ENCODE measurements at regions of chr1 and their contacts with region 1.

Region 1: DNA sequence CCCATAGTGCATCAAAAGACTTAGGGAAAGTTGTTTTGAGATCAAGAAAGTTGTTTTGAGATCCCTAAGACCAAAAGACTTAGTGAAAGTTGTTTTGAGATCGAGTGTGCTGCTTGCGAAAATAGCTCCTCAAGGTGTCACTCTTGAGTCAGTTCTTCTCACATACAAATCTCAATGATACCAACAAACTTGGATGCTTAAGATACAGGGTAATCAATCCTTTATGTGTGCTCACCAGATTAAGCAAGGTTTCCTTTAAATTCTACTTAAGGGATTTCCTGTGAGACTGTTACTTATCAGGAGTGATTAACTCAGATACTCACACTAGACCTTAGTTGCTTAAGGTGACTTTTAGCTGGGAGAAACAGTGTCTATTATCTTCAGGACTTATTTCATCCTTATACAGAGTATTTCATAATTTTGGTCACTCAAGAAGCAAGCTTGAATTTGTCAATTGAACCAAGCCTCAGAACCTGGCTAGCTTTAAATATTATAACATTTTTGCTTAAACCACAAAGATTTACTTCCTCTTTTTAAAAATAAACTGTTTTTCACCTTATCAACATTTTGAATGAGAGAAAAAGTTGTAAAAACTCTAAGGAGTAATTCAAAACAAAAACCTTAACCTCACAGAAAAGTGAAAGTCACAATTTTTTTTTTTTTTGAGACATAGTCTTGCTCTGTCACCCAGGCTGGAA is 8.0 kb upstream of the RLF start:
- DNase-seq: no peak
- H3K4me3 ChIP-seq: no peak overlapping the region
- CTCF ChIP-seq: peak; percentile 65

Region 2: DNA sequence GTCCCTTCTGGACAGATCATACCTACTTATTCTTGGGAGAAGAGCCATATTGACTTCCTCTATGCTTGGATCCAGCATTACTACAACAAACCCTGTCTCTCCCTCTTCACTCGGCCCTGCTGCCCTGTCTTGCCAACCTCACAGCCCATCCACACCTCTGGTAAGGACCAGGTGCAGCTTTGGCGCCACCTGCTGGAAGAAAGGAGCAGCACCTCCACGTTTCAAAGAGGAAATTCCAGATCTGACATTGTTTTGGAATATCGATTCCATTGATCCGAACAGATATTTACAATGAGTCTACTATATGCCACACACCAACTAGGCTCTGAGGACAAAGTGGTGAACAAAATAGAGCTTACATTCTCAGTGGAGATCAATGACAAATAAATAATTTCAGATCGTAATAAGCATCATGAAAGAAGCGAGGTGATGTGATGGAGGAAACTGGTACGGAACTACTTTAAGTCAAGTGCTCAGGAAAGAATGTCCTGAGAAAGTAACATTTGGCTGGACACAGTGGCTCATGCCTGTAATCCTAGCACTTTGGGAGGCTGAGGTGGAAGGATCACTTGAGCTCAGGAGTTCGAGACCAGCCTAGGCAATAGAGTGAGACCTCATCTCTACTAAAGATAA is 179.6 kb before region 1 on chr1:
- CTCF ChIA-PET with region 1: no interaction called
- POLR2A ChIA-PET with region 1: no interaction called
- DNase-seq: no peak
- H3K4me3 ChIP-seq: no peak overlapping the region
- CTCF ChIP-seq: peak; percentile 92

Region 3: GRCh38 chr1:40032240-40032891 is 120.9 kb before region 1 on chr1:
- CTCF ChIA-PET with region 1: no interaction called
- POLR2A ChIA-PET with region 1: no interaction called
- DNase-seq: no peak
- H3K4me3 ChIP-seq: no peak overlapping the region
- CTCF ChIP-seq: peak; percentile 70

Region 4: DNA sequence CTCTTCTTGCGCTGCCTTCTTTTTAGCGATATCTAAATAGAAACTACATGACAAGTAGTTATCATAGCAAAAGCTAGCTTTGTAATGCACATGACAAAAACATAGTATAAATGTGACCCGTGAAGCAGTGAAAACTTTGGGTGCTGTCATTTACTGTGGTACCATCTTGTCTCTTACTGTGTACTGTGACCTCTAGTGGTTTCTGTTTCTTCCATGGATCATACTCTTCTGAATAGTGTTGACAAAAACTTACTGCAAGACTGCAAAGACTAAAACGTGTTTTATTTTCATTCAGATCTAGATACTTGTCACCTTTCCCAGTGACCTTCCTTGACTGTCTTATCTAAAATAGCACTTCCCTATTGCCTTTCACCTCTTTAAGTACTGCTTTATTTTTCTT is 14.1 kb after region 1 on chr1:
- CTCF ChIA-PET with region 1: interaction called, 25 read pairs
- POLR2A ChIA-PET with region 1: no interaction called
- DNase-seq: no peak
- H3K4me3 ChIP-seq: no peak overlapping the region
- CTCF ChIP-seq: no peak

Region 5: GRCh38 chr1:40256401-40257084 is 103.3 kb after region 1 on chr1:
- CTCF ChIA-PET with region 1: interaction called, 11 read pairs
- POLR2A ChIA-PET with region 1: no interaction called
- DNase-seq: no peak
- H3K4me3 ChIP-seq: peak overlapping the region; percentile 92
- CTCF ChIP-seq: no peak

Region 6: GRCh38 chr1:40305457-40305856 is 152.2 kb after region 1 on chr1:
- CTCF ChIA-PET with region 1: interaction called, 11 read pairs
- POLR2A ChIA-PET with region 1: no interaction called
- DNase-seq: no peak
- H3K4me3 ChIP-seq: no peak overlapping the region
- CTCF ChIP-seq: no peak

Region 7: GRCh38 chr1:40338745-40339424 is 185.7 kb after region 1 on chr1:
- CTCF ChIA-PET with region 1: interaction called, 433 read pairs
- POLR2A ChIA-PET with region 1: no interaction called
- DNase-seq: no peak
- H3K4me3 ChIP-seq: no peak overlapping the region
- CTCF ChIP-seq: peak; percentile 95

Region 8: GRCh38 chr1:40404670-40405462 is 251.6 kb after region 1 on chr1:
- CTCF ChIA-PET with region 1: interaction called, 119 read pairs
- POLR2A ChIA-PET with region 1: no interaction called
- DNase-seq: no peak
- H3K4me3 ChIP-seq: no peak overlapping the region
- CTCF ChIP-seq: peak; percentile 36

Region 9: GRCh38 chr1:40438391-40439015 is 285.3 kb after region 1 on chr1:
- CTCF ChIA-PET with region 1: interaction called, 18 read pairs
- POLR2A ChIA-PET with region 1: no interaction called
- DNase-seq: no peak
- H3K4me3 ChIP-seq: no peak overlapping the region
- CTCF ChIP-seq: peak; percentile 45